Activated B cell treated with CpG ODN at 0.5 μM for 24 hours (primary cell): ENCODE measurements at regions of chr4 and their contacts with region 1.

Region 1: DNA sequence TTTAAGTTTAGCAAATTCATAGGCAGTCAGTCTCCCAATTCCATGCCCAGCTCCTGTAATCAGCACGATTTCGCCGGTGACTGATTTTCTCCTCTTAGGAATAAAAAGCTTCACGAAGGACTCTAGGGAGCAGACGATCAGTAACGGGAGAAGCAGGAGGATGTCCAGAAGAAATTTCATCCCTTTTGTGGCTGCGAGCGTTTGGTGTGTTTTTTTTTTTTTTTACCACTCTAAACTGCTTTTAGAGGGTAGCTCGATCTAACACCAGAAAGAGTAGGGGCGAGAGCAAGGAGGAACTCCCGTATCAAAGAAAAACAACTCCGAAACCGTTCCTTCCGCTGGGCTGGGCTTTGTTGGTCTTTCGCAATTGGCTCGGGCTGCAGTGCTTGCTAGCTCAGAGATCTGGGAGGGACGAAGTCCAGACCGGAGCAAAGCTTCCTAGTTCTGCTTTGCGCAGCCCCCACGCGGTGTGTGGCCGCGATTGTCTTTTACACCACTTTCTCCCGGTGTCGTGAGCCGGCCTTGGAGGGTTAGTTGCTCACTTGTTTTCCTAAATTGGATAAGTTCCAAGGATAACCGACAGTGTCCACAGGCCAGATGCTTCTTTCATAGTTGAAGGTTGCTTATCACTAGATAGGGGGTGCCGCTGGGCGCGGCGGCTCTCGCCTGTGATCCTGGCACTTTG is at the start of gene HSD17B11:
- DNase-seq: peak; percentile 70
- ATAC-seq: peak; percentile 99
- H3K4me3 Mint-ChIP-seq: peak within 1 kb of the TSS; percentile 97
- H3K27ac Mint-ChIP-seq: peak within 1 kb of the TSS; percentile 96
- H3K4me1 Mint-ChIP-seq: peaks cover 48% of the 10 kb centered on the region
- H3K27me3 Mint-ChIP-seq: no peaks in the 10 kb centered on the region
- CTCF ChIP-seq: no peak
- total RNA-seq, gene HSD17B11: 26.2 and 28.4 TPM in 2 replicates

Region 2: DNA sequence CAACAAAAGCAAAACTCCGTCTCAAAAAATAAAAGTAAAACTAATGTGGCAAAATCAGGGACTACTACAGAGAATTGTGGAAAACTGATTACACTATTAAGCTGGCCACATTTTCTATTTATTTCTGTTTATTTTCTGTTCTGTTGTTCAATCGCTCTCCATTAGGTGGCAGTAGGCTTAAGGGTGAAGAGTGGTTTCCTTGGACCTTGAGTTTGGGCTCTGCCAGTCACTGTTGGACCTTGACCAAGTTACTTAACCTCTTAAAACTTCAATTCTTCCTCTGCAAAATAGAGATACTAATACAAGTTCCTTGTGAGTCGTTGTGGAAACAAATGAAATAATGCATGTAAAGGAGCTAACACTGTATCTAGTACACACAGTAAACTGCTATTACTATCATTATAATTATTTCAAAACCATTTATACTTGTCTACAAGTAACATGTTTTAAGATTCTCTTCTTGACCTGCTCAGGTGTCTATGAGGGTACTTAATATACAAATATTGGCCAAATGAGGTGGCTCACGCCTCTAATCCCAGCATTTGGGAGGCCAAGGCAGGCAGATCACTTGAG is 15.2 kb before region 1 on chr4:
- CTCF ChIA-PET with region 1: interaction called, 11 read pairs
- POLR2A ChIA-PET with region 1: interaction called, 7 read pairs
- intact Hi-C with region 1: no loop called
- DNase-seq: no peak
- ATAC-seq: peak; percentile 73
- H3K4me3 Mint-ChIP-seq: no peak overlapping the region
- H3K27ac Mint-ChIP-seq: no peak overlapping the region
- H3K4me1 Mint-ChIP-seq: peaks cover 7% of the 10 kb centered on the region
- H3K27me3 Mint-ChIP-seq: no peaks in the 10 kb centered on the region
- CTCF ChIP-seq: no peak

Region 3: GRCh38 chr4:87406462-87406861 is 15.4 kb after region 1 on chr4:
- CTCF ChIA-PET with region 1: no interaction called
- POLR2A ChIA-PET with region 1: no interaction called
- intact Hi-C with region 1: loop called (anchors 2 kb)
- DNase-seq: no peak
- ATAC-seq: peak; percentile 58
- H3K4me3 Mint-ChIP-seq: peak overlapping the region; percentile 66
- H3K27ac Mint-ChIP-seq: peak overlapping the region; percentile 54
- H3K4me1 Mint-ChIP-seq: peaks cover 18% of the 10 kb centered on the region
- H3K27me3 Mint-ChIP-seq: peaks cover 4% of the 10 kb centered on the region
- CTCF ChIP-seq: no peak

Region 4: DNA sequence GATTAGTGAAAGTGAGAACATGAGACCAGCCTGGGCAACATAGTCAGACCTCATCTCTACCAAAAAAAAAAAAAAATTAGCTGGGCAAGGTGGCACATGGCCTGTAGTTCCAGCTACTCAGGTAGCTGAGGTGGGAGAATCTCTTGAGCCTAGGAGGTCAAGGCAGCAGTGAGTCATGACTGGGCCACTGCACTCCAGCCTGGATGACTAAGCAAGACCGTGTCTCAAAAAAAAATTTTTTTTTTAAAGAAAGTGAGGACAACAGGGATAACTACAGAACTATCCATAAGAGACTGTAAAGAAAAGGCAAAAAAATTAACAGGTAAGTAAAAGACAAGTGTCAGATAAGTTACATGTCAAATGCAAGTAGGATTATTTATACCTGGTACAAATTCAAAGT is 571.0 kb after region 1 on chr4:
- CTCF ChIA-PET with region 1: no interaction called
- POLR2A ChIA-PET with region 1: no interaction called
- intact Hi-C with region 1: no loop called
- DNase-seq: no peak
- ATAC-seq: no peak
- H3K4me3 Mint-ChIP-seq: no peak overlapping the region
- H3K27ac Mint-ChIP-seq: no peak overlapping the region
- H3K4me1 Mint-ChIP-seq: no peaks in the 10 kb centered on the region
- H3K27me3 Mint-ChIP-seq: no peaks in the 10 kb centered on the region
- CTCF ChIP-seq: no peak